Activated B cell treated with CpG ODN at 0.5 μM for 24 hours (primary cell): ENCODE measurements at regions of chr4 and their contacts with region 1.

Region 1: DNA sequence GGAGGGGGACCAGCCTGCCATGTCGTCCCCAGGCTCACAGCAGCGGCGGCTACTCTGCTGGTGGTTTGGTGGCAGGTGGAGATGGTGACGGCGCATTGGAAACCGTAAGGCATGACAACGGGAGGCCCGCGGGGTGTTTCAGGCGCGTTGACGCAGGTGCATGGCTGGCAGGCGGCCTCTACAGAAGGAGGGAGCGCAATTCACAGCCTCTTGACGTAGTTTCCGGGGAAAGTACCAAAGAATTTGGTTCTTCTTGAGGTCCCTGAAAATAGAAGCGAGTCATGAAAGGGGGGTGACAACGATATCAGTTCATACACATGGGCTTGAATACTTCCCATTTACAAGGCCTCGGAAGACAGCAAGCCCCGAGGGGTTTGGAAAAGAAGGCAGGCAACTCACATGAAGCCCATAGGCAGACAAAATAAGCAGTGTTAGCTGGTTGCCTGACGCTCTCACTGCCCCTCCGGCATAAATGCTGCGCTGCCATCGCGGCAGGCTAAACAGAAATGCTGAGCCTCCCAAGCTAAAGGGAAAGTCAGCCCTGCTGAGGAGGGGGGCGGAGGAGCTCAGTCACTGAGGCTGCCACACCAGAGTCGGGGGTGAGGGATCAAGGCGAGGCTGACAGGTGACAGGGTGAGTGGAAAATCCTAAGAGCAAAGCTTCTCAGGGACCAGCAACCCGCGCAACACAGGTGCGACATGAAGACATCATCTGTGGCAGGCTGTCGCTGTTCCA is 52.3 kb upstream of the PDLIM3 start:
- DNase-seq: peak; percentile 66
- ATAC-seq: peak; percentile 92
- H3K4me3 Mint-ChIP-seq: peak overlapping the region; percentile 82
- H3K27ac Mint-ChIP-seq: peak overlapping the region; percentile 95
- H3K4me1 Mint-ChIP-seq: peaks cover 20% of the 10 kb centered on the region
- H3K27me3 Mint-ChIP-seq: peaks cover 26% of the 10 kb centered on the region
- CTCF ChIP-seq: no peak

Region 2: GRCh38 chr4:185203486-185204237 is 383.9 kb before region 1 on chr4 and contains the start of gene CFAP97:
- CTCF ChIA-PET with region 1: no interaction called
- POLR2A ChIA-PET with region 1: no interaction called
- intact Hi-C with region 1: loop called (anchors 2 kb)
- DNase-seq: peak; percentile 82
- ATAC-seq: peak; percentile 81
- H3K4me3 Mint-ChIP-seq: peak within 1 kb of the TSS; percentile 93
- H3K27ac Mint-ChIP-seq: peak within 1 kb of the TSS; percentile 97
- H3K4me1 Mint-ChIP-seq: peaks cover 47% of the 10 kb centered on the region
- H3K27me3 Mint-ChIP-seq: no peaks in the 10 kb centered on the region
- CTCF ChIP-seq: no peak
- total RNA-seq, gene CFAP97: 42.6 and 44.1 TPM in 2 replicates

Region 3: GRCh38 chr4:185534866-185535611 is 52.6 kb before region 1 on chr4 and contains the start of gene PDLIM3:
- CTCF ChIA-PET with region 1: no interaction called
- POLR2A ChIA-PET with region 1: no interaction called
- intact Hi-C with region 1: loop called (anchors 2 kb)
- DNase-seq: no peak
- ATAC-seq: no peak
- H3K4me3 Mint-ChIP-seq: peak within 1 kb of the TSS; percentile 68
- H3K27ac Mint-ChIP-seq: no peak within 1 kb of the TSS
- H3K4me1 Mint-ChIP-seq: peaks cover 5% of the 10 kb centered on the region
- H3K27me3 Mint-ChIP-seq: peaks cover 34% of the 10 kb centered on the region
- CTCF ChIP-seq: no peak
- total RNA-seq, gene PDLIM3: 0.20 TPM in 1 of 2 replicates, not detected in the other

Region 4: DNA sequence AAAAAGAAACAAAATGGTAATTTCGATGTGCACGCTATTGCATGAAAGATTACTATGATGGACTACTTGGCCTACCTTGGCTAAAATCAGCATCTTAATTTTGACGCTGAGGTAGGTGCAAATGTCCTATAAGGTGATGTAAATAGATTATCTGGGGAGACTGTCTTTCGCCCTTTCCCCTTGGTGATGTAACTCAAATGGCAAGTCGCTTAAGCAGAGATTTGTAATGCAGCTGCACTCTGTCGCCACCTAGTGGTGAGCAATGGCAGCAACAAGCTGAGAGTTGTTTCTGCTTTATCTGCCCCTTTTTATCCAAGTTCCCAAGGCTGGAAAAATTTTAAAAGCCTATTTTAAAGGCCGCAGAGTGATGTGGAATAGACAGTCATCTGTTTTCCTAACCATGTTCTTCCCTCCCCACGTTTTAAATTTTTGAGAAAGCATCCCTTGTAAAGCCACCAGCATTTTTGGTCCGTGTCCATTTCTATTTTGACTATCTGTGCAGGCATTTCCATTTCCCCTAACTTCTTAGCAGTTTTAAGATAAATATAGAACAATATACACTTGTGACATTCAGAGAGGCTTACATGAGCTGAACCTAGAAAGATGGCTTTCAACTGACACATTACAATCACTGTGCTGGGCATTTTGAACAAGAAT is 10.1 kb after region 1 on chr4:
- CTCF ChIA-PET with region 1: interaction called, 28 read pairs
- POLR2A ChIA-PET with region 1: no interaction called
- intact Hi-C with region 1: loop called (anchors 1 kb)
- DNase-seq: peak; percentile 49
- ATAC-seq: peak; percentile 72
- H3K4me3 Mint-ChIP-seq: no peak overlapping the region
- H3K27ac Mint-ChIP-seq: no peak overlapping the region
- H3K4me1 Mint-ChIP-seq: no peaks in the 10 kb centered on the region
- H3K27me3 Mint-ChIP-seq: peaks cover 19% of the 10 kb centered on the region
- CTCF ChIP-seq: peak; percentile 100

Region 5: DNA sequence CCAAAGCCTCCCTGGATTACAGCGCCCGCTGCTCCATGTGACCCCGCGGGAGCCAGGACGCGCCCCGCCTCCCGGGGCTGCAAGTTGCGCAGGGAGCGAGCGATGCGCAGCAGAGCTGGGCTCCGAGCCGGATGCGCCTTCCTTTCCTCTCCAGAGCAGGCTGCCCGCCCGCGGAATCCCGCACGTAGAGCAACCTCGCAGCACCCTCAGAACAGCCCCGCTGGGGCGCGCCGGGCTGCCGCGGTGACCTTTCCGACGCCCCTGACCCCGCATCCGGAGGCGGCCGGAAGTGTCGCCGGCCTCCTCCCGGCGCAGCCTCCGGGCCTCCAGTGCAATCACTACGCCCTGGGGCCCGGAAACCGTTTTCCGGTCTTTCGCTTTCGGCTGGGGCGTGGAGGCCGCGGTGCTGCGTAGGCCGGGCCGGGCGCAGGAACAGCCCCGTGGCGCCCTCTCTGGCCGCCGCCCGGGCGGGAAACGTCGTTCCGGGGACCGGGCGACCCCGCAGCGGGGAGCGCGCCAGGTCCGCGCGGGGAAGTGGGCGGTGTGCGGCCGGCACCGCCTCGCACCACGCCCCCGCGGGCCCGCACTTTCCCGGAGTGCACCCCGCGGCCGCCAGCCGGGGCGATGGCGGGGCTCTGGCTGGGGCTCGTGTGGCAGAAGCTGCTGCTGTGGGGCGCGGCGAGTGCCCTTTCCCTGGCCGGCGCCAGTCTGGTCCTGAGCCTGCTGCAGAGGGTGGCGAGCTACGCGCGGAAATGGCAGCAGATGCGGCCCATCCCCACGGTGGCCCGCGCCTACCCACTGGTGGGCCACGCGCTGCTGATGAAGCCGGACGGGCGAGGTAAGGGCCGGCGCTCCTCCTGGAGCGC is 603.8 kb after region 1 on chr4 and contains the start of gene CYP4V2:
- CTCF ChIA-PET with region 1: no interaction called
- POLR2A ChIA-PET with region 1: no interaction called
- intact Hi-C with region 1: loop called (anchors 1 kb)
- DNase-seq: peak; percentile 84
- ATAC-seq: peak; percentile 86
- H3K4me3 Mint-ChIP-seq: peak within 1 kb of the TSS; percentile 90
- H3K27ac Mint-ChIP-seq: peak within 1 kb of the TSS; percentile 88
- H3K4me1 Mint-ChIP-seq: peaks cover 26% of the 10 kb centered on the region
- H3K27me3 Mint-ChIP-seq: peaks cover 2% of the 10 kb centered on the region
- CTCF ChIP-seq: no peak
- total RNA-seq, gene CYP4V2: 7.7 and 9.5 TPM in 2 replicates